Posterior cingulate gyrus (tissue), 11 donors: ENCODE measurements at regions of chr17 and their contacts with region 1.

Region 1: GRCh38 chr17:1365445-1366039 is 34.5 kb downstream of the YWHAE start:
- DNase-seq: peak in 6 of 10 donors; percentile 40 to 92 (median 49)

Region 2: GRCh38 chr17:1399679-1400512 is 34.4 kb after region 1 on chr17 and contains the start of gene YWHAE:
- intact Hi-C with region 1: loop called (anchors 5 kb)
- DNase-seq: peak; percentile 94 to 99 (median 96)

Region 3: DNA sequence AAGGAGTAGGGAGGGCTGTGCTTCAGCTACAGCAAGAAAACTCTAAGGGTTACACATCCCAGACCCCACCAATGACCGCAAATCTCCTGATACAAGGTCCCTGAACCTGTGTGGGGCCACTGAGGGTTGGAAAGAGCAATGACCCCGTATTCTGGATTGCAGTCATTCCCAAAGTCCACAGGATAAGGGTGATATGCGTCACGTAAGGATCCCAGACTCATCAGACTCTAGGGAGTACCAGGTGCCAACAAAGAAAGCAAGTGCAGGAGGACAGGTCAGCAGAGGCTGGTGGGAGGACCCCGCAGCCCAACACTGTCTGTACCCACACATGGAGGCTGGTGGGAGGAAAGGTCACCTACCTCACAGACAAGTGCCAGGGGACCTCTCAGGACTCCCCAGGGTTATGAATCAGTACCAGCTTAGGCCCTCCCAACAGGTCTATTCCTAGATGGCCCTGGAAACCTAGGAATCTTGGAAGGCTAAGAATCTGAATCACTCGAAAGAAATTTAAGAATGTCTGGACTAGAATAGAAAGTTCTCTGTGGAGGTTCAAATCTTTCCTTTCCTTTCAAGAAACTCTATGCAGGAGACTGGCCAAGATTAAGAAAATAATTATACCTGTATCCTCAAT is 180.9 kb after region 1 on chr17:
- intact Hi-C with region 1: no loop called
- DNase-seq: no peak

Region 4: GRCh38 chr17:1561400-1562175 is 196.0 kb after region 1 on chr17:
- intact Hi-C with region 1: loop called (anchors 5 kb)
- DNase-seq: peak in 2 of 10 donors; percentile 72 to 81